Heart left ventricle (tissue), 16 donors: ENCODE measurements at regions of chr1 and their contacts with region 1.

Region 1: GRCh38 chr1:212665241-212666115 is 34.2 kb downstream of the BATF3 start:
- DNase-seq: peak; percentile 84 to 92 (median 90)
- ATAC-seq: peak; percentile 95 to 98 (median 96)
- H3K4me3 ChIP-seq: peak overlapping the region; percentile 27 to 78 (median 64)
- H3K27ac ChIP-seq: peak overlapping the region in 11 of 12 donors; percentile 50 to 87 (median 77)
- H3K4me1 ChIP-seq: peaks cover 0 to 47% (median 23%) of the 10 kb centered on the region in 12 donors
- H3K27me3 ChIP-seq: no peaks in the 10 kb centered on the region
- CTCF ChIP-seq: peak; percentile 91 to 99 (median 97)
- POLR2A ChIP-seq: no peak

Region 2: DNA sequence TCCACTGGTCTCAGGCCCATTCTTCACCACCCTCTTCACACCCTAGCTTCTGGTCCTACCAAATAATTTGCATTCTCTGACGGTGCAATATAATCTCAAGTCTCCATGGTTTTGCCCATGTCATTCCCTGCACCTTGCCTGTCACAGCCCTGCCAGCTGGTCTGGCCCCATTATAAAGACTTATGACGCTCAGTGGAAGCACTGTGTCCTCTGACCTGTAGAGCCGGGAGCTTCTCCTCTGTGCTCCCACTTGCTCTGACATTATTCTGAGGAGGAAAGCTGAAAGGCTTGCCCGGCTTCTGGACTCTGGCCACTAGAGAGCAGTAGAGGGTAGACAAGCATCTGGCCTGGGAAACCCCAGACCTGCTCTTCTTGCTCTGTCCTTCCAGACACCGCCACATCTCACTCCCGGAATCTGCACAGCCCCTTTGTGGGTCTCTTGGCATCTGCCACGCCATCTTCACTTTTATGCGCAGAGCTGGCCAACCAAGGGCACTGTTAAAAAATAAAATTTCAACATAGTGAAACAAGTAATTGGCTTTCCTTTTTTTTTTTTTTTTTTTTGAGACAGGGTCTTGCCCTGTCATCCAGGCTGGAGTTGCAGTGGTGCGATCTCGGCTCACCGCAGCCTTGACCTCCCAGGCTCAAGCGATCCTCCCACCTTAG is 188.3 kb before region 1 on chr1:
- intact Hi-C with region 1: loop called in 1 of 10 experiments (anchors 10 kb)
- DNase-seq: peak; percentile 79 to 84 (median 82)
- ATAC-seq: peak; percentile 89 to 97 (median 94)
- H3K4me3 ChIP-seq: no peak overlapping the region
- H3K27ac ChIP-seq: no peak overlapping the region
- H3K4me1 ChIP-seq: peaks cover 0 to 15% (median 0%) of the 10 kb centered on the region in 12 donors
- H3K27me3 ChIP-seq: no peaks in the 10 kb centered on the region
- CTCF ChIP-seq: peak; percentile 85 to 96 (median 90)
- POLR2A ChIP-seq: no peak

Region 3: DNA sequence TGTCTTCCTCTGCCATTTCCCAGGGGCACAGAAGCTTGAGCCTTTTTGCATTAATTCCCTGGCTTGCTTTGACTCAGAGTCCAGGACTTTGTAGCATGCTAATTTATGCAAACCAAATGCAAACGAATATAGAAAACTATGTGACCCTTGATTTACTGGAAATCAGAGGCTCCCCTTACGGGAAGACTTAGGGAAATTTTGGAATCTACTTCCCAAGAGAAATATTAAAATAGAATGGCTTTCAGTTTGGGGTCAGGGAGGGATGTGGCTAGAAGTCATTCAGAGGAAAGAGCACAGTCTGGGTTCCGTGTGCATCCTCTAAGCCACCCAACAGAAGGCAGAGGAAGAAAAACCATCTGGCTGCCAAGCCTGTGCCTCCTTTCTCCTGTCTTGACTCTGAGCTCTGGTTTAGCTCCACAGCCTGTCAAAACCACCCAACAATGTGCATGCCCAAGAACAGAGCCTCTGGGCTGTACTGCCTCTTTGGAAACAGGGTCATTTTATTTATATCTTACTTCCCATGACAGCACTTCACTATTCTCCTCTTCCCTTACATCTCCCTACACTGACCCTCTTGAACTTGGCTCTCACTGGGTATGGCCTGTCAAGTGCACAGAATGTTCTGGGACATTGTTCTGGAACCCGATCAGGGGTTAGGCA is 26.9 kb before region 1 on chr1:
- intact Hi-C with region 1: loop called in 1 of 10 experiments (anchors 2 kb)
- DNase-seq: peak in 4 of 5 donors; percentile 50 to 70 (median 56)
- ATAC-seq: peak; percentile 81 to 92 (median 88)
- H3K4me3 ChIP-seq: peak overlapping the region in 8 of 12 donors; percentile 25 to 47 (median 38)
- H3K27ac ChIP-seq: peak overlapping the region; percentile 54 to 95 (median 78)
- H3K4me1 ChIP-seq: peaks cover 3 to 60% (median 42%) of the 10 kb centered on the region in 12 donors
- H3K27me3 ChIP-seq: no peaks in the 10 kb centered on the region
- CTCF ChIP-seq: no peak
- POLR2A ChIP-seq: no peak

Region 4: GRCh38 chr1:212749821-212750535 is 84.5 kb after region 1 on chr1:
- intact Hi-C with region 1: loop called in 1 of 10 experiments (anchors 2 kb)
- DNase-seq: no peak
- ATAC-seq: peak in 1 of 4 donors; percentile 55
- H3K4me3 ChIP-seq: no peak overlapping the region
- H3K27ac ChIP-seq: peak overlapping the region in 2 of 12 donors; percentile 9 to 17
- H3K4me1 ChIP-seq: peaks cover 0 to 54% (median 14%) of the 10 kb centered on the region in 12 donors
- H3K27me3 ChIP-seq: no peaks in the 10 kb centered on the region
- CTCF ChIP-seq: peak; percentile 50 to 79 (median 68)
- POLR2A ChIP-seq: no peak

Region 5: DNA sequence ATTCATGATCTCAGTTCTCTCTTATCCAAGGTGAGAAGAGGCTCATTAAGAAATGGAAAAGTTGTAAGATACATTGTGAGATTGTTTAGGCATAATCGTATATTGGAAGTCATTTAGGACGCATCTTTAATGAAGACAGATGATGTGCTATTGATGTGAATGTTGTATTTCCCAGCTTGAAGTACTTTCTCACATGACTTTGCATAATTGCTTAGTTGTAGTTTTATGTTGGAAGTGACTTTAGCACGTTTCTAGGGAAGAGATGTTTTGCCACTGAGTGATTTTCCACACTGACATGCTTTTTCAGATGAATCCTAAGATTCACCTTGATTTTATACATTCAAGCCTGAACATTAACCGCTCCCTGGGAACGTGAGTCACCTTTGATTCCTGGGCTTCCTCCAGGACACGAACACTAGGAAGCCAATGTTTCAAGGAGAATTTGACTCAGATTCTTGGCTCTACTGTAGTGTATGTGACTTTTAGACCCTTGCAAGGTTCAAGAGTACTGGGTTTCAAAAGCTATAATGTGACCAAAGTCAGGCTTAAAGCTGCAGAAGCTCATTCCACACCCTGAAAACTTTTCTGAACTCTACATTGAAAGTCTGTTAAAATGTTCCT is 322.3 kb after region 1 on chr1:
- intact Hi-C with region 1: loop called in 5 of 10 experiments (anchors 5 to 10 kb)
- DNase-seq: no peak
- ATAC-seq: no peak
- H3K4me3 ChIP-seq: no peak overlapping the region
- H3K27ac ChIP-seq: no peak overlapping the region
- H3K4me1 ChIP-seq: peaks cover 0 to 6% (median 0%) of the 10 kb centered on the region in 12 donors
- H3K27me3 ChIP-seq: no peaks in the 10 kb centered on the region
- CTCF ChIP-seq: no peak
- POLR2A ChIP-seq: no peak